ENCODE measurements at regions of chr10 and their contacts with region 1.

Region 1: GRCh38 chr10:69506834-69507721 is 55.8 kb downstream of the TSPAN15 start:
- DNase-seq: peak; percentile 45
- H3K4me3 ChIP-seq: no peak overlapping the region
- H3K27ac ChIP-seq: peak overlapping the region; percentile 28
- H3K4me1 ChIP-seq: peaks cover 3% of the 10 kb centered on the region
- H3K27me3 ChIP-seq: no peaks in the 10 kb centered on the region
- CTCF ChIP-seq: no peak

Region 2: GRCh38 chr10:69237528-69238159 is 269.4 kb before region 1 on chr10:
- intact Hi-C with region 1: loop called (anchors 10 kb)
- DNase-seq: peak; percentile 90
- H3K4me3 ChIP-seq: no peak overlapping the region
- H3K27ac ChIP-seq: no peak overlapping the region
- H3K4me1 ChIP-seq: no peaks in the 10 kb centered on the region
- H3K27me3 ChIP-seq: no peaks in the 10 kb centered on the region
- CTCF ChIP-seq: peak; percentile 93

Region 3: GRCh38 chr10:69408318-69409175 is 98.5 kb before region 1 on chr10:
- intact Hi-C with region 1: loop called (anchors 5 kb)
- DNase-seq: peak; percentile 97
- H3K4me3 ChIP-seq: peak overlapping the region; percentile 13
- H3K27ac ChIP-seq: peak overlapping the region; percentile 90
- H3K4me1 ChIP-seq: no peaks in the 10 kb centered on the region
- H3K27me3 ChIP-seq: no peaks in the 10 kb centered on the region
- CTCF ChIP-seq: peak; percentile 74

Region 4: GRCh38 chr10:69428165-69428564 is 78.9 kb before region 1 on chr10:
- intact Hi-C with region 1: loop called (anchors 2 kb)
- DNase-seq: no peak
- H3K4me3 ChIP-seq: no peak overlapping the region
- H3K27ac ChIP-seq: no peak overlapping the region
- H3K4me1 ChIP-seq: peaks cover 8% of the 10 kb centered on the region
- H3K27me3 ChIP-seq: no peaks in the 10 kb centered on the region
- CTCF ChIP-seq: no peak

Measured in colonic mucosa (tissue), 4 donors.